Activated naive CD4-positive, alpha-beta T cell treated with anti-CD3 and anti-CD28 coated beads for 36 hours (primary cell): ENCODE measurements at regions of chr7 and their contacts with region 1.

Region 1: DNA sequence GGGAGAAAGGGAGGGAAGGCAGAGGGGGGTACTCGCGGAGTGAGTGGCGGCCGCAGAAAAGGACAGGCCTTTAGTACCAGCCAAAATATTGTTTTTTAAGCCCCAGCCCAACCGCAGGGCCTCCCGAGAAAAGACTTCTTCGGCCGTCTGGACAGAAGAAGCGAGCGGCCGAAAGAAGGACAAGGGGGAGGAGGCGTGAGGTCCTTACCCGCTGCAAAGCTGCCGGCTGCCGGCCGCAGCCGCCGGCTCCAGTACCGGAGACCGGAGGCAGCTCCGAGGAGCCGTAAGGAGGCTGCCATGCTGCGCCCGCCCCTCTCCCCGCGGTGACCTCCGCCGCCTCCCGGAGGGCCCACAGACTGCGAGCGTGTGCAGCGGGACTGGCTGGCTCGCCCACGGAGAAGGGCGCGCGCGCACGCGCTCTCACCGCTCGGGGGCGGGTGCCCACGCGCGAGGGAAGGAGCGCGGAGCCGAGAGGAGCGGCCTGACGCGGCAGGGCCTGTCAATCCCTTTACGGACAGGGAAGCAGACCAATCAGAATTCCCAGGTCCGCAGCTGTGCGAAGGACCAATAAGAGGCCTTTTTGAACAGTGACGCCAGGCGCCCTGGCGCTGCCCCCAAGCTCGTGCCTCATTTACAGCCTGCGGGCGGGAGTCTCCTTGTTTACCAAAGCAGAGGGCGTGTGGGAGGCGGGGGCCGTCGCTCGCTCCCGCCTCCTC is at the start of gene HIBADH:
- DNase-seq: peak; percentile 97
- H3K4me3 Mint-ChIP-seq: peak within 1 kb of the TSS; percentile 82
- H3K27ac Mint-ChIP-seq: peak within 1 kb of the TSS; percentile 69
- H3K4me1 Mint-ChIP-seq: peaks cover 14% of the 10 kb centered on the region
- H3K27me3 Mint-ChIP-seq: no peaks in the 10 kb centered on the region
- total RNA-seq, gene HIBADH: 20.8 to 22.5 TPM

Region 2: DNA sequence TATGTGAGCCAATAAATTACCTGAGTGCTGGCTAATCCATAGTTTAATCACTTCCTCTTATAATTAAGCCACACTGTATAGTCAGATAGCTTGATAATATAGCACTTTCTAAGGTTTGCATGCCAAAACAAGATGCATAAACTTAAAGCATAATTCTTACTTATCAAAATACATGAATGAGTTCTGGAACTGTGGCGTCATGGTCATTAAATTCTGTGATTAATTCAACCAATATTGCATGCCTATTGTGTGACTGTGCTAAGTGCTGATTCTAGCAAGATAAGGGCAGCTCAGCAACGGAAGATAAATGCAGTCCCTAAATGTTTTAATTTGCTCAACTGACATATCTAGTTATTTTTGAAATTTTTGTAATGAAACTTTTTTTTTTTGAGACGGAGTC is 596.5 kb before region 1 on chr7:
- CTCF ChIA-PET with region 1: no interaction called
- intact Hi-C with region 1: no loop called
- DNase-seq: no peak
- H3K4me3 Mint-ChIP-seq: no peak overlapping the region
- H3K27ac Mint-ChIP-seq: no peak overlapping the region
- H3K4me1 Mint-ChIP-seq: no peaks in the 10 kb centered on the region
- H3K27me3 Mint-ChIP-seq: peaks cover 2% of the 10 kb centered on the region

Region 3: DNA sequence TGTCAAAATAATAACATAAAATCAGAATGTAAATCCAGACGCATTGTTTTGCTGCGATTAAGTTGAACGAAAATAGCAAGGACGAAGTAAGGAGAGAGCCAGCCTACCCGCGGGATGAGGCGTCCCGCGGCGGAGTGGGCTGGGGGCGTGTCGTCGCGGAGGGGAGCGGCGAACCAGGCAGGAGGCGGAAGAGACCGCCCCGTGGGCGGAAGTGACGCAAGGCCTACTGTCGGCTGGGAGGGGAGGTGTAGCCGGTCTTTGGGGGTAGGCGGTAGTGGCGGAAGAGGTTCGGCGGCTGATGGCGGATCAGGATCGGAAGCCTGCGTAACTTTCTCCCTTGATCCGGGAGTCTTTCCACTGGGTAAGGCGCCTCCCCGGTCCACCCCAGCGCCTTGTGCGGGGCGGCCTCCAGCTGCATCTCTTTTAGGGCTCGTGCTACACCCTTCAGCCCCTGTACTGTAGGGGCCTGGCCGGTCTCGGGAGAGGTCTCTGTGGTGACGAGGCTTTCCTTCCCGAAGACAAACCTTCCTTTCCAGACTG is 77.3 kb after region 1 on chr7 and contains the start of gene TAX1BP1:
- CTCF ChIA-PET with region 1: interaction called, 5 read pairs
- intact Hi-C with region 1: loop called (anchors 1 kb)
- DNase-seq: peak; percentile 96
- H3K4me3 Mint-ChIP-seq: peak within 1 kb of the TSS; percentile 96
- H3K27ac Mint-ChIP-seq: peak within 1 kb of the TSS; percentile 98
- H3K4me1 Mint-ChIP-seq: peaks cover 35% of the 10 kb centered on the region
- H3K27me3 Mint-ChIP-seq: no peaks in the 10 kb centered on the region
- total RNA-seq, gene TAX1BP1: 84.1 to 87.9 TPM

Region 4: GRCh38 chr7:27774717-27775328 is 112.2 kb after region 1 on chr7:
- CTCF ChIA-PET with region 1: interaction called, 5 read pairs
- intact Hi-C with region 1: loop called (anchors 2 kb)
- DNase-seq: no peak
- H3K4me3 Mint-ChIP-seq: no peak overlapping the region
- H3K27ac Mint-ChIP-seq: no peak overlapping the region
- H3K4me1 Mint-ChIP-seq: peaks cover 21% of the 10 kb centered on the region
- H3K27me3 Mint-ChIP-seq: no peaks in the 10 kb centered on the region

Region 5: GRCh38 chr7:27901028-27901760 is 238.5 kb after region 1 on chr7:
- CTCF ChIA-PET with region 1: no interaction called
- intact Hi-C with region 1: loop called (anchors 1 kb)
- DNase-seq: peak; percentile 51
- H3K4me3 Mint-ChIP-seq: no peak overlapping the region
- H3K27ac Mint-ChIP-seq: no peak overlapping the region
- H3K4me1 Mint-ChIP-seq: peaks cover 30% of the 10 kb centered on the region
- H3K27me3 Mint-ChIP-seq: no peaks in the 10 kb centered on the region